Activated CD8-positive, alpha-beta T cell treated with anti-CD3 and anti-CD28 coated beads, Interleukin-2, amount 10 ng/mL, durations not matched to agents 7 days and 5 days (primary cell): ENCODE measurements at regions of chr5 and their contacts with region 1.

Region 1: GRCh38 chr5:174327317-174328236 is 282.1 kb downstream of the NSG2 start:
- DNase-seq: peak; percentile 72
- ATAC-seq: peak; percentile 49
- H3K4me3 Mint-ChIP-seq: no peak overlapping the region
- H3K27ac Mint-ChIP-seq: no peak overlapping the region
- H3K4me1 Mint-ChIP-seq: peaks cover 1% of the 10 kb centered on the region
- H3K27me3 Mint-ChIP-seq: no peaks in the 10 kb centered on the region

Region 2: GRCh38 chr5:174056064-174056847 is 271.3 kb before region 1 on chr5:
- CTCF ChIA-PET with region 1: no interaction called
- POLR2A ChIA-PET with region 1: no interaction called
- DNase-seq: no peak
- ATAC-seq: no peak
- H3K4me3 Mint-ChIP-seq: no peak overlapping the region
- H3K27ac Mint-ChIP-seq: no peak overlapping the region
- H3K4me1 Mint-ChIP-seq: no peaks in the 10 kb centered on the region
- H3K27me3 Mint-ChIP-seq: peaks cover under 1% of the 10 kb centered on the region

Region 3: DNA sequence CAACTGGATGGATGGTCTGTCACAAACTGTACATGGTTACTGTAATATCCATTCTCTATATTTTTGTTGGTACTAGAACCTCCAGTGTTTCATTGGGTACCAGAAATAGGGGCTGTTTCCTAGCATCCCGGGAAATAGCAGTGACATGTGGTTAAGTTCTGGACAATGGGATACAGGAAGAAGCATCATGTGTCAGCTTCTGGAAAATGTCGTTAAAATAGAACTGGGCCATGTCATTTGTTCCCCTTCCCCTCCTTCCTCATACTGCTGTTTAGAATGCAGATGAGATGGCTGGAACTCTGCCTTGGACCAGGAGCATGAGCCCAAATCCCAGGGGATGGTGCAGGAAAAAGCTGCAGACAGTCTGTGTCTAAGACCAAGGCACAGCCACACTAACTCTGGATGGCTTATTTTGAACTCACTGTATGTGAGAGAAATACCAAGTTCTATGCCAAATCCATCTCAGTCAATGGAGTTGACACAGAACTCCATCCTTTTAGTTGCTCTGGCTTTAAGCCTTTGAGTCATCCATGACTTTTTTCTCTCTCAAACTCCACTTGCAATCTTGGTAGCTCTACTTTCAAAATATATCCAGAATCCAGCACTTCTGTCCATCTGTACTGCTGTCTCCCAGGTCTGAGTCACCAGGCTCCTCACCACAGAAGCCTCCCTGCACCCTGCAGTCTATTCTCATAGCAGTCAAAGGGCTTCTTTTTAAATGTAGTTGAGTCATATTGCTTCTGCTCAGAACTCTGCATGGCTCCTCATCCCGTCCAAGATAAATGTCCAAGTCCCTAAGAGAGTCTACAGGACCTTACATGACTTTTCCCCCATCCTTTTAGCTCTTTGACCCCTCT is 97.8 kb before region 1 on chr5:
- CTCF ChIA-PET with region 1: no interaction called
- POLR2A ChIA-PET with region 1: no interaction called
- DNase-seq: no peak
- ATAC-seq: no peak
- H3K4me3 Mint-ChIP-seq: no peak overlapping the region
- H3K27ac Mint-ChIP-seq: no peak overlapping the region
- H3K4me1 Mint-ChIP-seq: no peaks in the 10 kb centered on the region
- H3K27me3 Mint-ChIP-seq: no peaks in the 10 kb centered on the region

Region 4: DNA sequence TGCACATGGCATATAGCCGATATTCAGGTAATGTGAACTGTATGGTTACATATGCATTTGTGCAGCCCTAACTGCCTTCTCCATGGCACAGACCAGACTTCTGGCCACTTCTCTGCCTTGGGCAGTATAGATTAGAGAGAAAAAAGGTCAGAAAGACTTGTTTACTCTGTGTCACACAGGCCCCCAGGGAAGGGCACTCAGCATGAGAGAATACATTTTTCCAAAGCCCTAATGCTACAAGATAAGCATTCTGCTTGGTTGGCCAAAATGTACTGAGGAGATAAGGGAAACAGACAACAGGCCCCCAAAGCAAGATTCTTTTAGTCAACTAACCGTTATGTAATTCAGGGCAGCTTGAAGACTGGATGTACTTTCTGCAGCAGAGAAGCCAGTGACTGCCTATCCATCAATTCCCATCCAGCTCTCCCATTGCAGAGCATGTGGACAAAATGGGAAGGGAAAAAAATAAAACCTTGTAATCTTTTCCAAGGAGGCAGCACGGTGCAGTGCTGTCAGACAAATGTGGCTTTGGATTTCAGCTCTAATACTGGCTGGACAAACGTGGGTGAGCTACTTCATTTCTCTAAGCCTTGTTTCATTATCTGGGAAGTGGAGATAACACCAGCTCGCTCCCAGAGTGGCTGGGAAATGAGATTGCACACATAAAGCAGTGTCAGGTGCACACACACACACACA is 76.1 kb before region 1 on chr5:
- CTCF ChIA-PET with region 1: no interaction called
- POLR2A ChIA-PET with region 1: no interaction called
- DNase-seq: no peak
- ATAC-seq: no peak
- H3K4me3 Mint-ChIP-seq: no peak overlapping the region
- H3K27ac Mint-ChIP-seq: no peak overlapping the region
- H3K4me1 Mint-ChIP-seq: no peaks in the 10 kb centered on the region
- H3K27me3 Mint-ChIP-seq: no peaks in the 10 kb centered on the region

Region 5: DNA sequence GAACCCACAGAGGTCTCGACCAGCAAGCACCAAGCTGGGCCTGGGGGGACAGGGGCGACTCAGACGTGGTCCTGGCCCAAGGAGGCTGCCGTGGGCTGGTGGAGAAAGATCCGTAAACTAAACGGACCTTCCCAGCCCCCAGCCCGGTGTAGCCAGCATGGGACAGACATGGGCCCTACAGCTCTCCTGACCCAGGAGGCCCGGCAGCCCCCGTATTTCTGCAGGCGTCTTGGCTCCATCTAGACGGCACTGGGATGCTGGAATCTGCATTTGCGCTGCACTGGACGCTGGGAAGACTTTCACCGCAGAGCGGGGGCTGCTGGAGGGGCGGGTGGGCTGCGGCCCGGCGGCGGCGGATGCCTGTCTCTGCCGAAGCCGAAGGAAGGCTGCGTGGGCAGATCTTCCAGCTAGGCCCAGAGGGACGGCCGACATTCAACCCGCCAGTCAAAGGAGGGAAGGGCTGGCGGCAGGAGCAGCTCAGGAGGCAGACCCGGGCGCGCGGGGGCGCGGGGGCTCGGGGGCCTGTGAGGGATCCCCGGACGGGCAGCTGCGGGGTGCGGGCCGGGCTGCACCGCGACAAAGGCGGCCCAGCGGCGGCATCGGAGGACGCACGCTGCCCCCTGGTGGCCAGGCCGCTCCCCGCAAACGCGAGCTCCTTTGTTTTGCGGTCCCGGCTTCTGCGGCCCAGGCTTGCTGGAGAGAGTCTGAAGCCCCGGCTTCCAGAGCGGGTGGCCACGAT is 15.9 kb before region 1 on chr5:
- CTCF ChIA-PET with region 1: interaction called, 11 read pairs
- POLR2A ChIA-PET with region 1: interaction called, 3 read pairs
- DNase-seq: peak; percentile 67
- ATAC-seq: peak; percentile 77
- H3K4me3 Mint-ChIP-seq: no peak overlapping the region
- H3K27ac Mint-ChIP-seq: no peak overlapping the region
- H3K4me1 Mint-ChIP-seq: no peaks in the 10 kb centered on the region
- H3K27me3 Mint-ChIP-seq: peaks cover 11% of the 10 kb centered on the region